BJ (cell line): ENCODE measurements at regions of chr15 and their contacts with region 1.

Region 1: DNA sequence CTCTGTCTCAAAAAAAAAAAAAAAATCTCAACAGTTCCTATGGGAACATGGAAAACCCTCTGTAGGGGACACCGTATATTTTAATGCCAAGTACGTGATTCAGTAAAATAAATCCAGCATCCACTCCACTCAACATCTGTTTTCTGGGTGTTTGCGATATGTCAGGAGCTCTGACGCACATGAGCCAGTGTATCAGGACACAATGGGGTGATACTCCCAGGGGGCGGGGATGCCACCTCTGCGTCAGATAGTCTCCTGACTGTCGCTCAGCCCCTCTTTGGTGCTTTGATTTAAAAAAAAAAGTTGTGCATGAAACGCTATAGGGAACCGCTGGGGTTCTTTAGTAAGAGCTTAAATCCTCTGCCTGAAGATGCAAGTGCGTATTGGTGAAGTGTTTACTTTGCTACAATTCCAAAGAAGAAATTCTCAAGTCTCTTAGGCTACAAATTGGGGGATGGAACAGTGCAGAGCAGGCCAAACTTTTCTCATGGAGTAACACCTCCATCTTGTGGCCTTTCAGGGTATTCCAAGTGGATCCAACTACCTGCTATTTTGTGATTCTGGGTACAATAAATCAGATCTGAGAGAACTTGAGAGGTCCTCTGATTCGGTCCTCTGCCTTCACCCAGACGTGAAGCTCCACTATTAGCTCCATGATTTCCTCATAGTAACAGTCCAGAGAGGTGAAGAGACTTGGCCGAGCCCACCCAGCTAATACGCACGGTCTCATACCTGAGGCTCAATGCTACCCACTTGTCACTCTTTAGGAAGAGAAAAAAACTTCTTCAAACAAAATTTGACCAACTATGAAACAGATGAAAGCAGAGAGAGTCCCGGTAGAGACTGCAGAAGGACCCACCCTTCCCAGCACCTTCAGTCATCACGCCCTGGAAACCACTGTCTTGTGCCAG is 9.3 kb upstream of the NR2E3 start:
- DNase-seq: no peak
- H3K4me3 ChIP-seq: no peak overlapping the region
- H3K27me3 ChIP-seq: no peaks in the 10 kb centered on the region
- CTCF ChIP-seq: peak; percentile 83

Region 2: GRCh38 chr15:71752604-71753289 is 48.3 kb before region 1 on chr15:
- CTCF ChIA-PET with region 1: interaction called, 89 read pairs
- POLR2A ChIA-PET with region 1: no interaction called
- DNase-seq: peak; percentile 92
- H3K4me3 ChIP-seq: no peak overlapping the region
- H3K27me3 ChIP-seq: no peaks in the 10 kb centered on the region
- CTCF ChIP-seq: peak; percentile 67

Region 3: DNA sequence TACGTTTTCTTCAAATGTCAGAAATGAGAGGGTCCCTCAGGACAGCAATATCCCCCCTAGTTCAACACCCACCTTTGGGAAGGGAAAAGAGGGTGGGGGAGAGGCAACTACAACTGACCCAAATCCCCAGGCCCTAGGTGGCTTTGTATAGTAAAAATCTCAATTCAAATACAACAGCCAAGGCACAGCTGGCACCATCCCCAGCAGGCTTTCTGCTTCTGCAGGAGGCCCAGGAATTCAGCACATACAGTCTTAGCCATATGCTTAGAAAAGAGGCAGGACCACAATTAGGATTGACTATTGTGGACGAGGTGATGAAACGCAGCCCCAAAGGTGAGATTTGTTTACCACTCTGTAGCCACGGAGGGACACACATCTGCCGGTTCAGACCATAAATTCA is 25.1 kb after region 1 on chr15:
- CTCF ChIA-PET with region 1: no interaction called
- POLR2A ChIA-PET with region 1: no interaction called
- DNase-seq: no peak
- H3K4me3 ChIP-seq: no peak overlapping the region
- H3K27me3 ChIP-seq: no peaks in the 10 kb centered on the region
- CTCF ChIP-seq: no peak